GM10248 (cell line): ENCODE measurements at regions of chr12 and their contacts with region 1.

Region 1: GRCh38 chr12:95805864-95806671 is 15.5 kb upstream of the NTN4 start:
- DNase-seq: no peak
- CTCF ChIP-seq: no peak

Region 2: GRCh38 chr12:95820102-95820703 is 14.1 kb after region 1 on chr12:
- CTCF ChIA-PET with region 1: interaction called, 10 read pairs
- POLR2A ChIA-PET with region 1: no interaction called
- DNase-seq: no peak
- CTCF ChIP-seq: peak; percentile 13